ENCODE measurements at regions of chr3 and their contacts with region 1.

Region 1: DNA sequence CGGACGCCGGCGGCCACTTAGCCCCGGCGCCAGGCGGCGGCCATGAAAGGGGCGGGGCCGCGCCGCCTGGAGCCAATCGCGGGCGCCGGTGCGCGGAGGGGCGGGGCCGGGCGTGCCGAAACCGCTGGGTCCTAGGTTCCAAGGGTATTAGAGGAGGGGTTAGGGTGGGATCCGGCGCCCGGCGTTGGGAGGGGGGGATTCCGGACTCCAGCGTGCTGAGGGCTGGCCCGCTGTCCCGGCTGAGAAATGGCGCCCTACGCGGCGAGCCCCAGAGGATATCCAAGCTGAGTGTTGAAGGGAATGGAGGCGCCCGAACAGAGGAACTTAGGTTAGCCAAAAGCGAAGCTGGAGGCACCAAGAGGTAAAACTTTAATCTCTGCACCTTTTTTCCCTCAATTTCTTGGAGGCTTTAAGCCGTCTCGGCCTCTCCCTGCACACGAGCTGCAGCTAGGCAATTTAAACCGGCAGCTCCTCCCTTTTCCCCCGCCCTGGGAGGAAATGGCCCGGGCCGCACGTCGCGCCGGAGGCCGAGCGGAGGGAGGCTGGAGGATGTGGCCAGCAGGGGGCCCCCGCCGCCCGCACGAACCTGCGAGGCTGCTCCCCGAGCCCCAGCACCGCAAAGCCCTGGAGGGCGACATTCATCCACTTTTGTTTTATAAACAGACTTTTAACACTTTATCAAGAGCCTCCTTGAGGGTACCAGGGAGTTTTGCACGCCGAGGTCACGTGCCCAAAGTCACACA is at the start of gene XXYLT1:
- DNase-seq: peak; percentile 91
- CTCF ChIP-seq: peak; percentile 93

Region 2: DNA sequence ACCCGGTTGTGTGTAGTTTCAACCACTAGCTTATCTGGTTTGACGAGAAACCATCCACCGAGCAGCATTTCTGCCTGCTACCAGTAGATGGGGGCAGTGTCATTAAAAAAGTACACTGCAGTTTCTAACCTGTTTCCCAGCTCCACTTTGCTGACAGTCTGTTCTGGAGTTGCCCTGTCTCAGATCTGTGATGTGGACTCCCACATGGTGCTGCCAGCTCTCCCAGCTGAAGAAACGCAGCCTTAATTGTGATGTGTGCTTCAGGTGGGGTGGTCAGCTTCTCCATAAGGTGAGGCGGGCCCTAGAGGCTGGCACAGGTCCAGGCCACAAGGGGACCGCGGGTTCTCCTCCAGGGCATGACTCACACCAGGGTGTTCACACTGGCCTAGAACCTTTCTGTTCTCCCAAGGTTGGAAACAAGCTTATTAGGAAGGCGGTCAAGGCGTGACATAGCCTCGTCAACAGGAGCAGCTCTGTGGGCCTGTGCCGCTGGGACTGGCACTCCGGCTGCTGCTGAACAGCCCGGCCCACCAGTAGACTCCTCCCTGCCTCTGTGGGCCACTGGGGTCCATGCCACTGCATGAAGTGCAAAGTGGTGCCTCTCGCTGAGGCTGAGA is 588.5 kb before region 1 on chr3:
- CTCF ChIA-PET with region 1: interaction called, 28 read pairs
- POLR2A ChIA-PET with region 1: no interaction called
- DNase-seq: peak; percentile 82
- CTCF ChIP-seq: peak; percentile 76

Region 3: GRCh38 chr3:195040773-195041520 is 230.3 kb before region 1 on chr3:
- CTCF ChIA-PET with region 1: no interaction called
- POLR2A ChIA-PET with region 1: no interaction called
- DNase-seq: no peak
- CTCF ChIP-seq: no peak

Region 4: DNA sequence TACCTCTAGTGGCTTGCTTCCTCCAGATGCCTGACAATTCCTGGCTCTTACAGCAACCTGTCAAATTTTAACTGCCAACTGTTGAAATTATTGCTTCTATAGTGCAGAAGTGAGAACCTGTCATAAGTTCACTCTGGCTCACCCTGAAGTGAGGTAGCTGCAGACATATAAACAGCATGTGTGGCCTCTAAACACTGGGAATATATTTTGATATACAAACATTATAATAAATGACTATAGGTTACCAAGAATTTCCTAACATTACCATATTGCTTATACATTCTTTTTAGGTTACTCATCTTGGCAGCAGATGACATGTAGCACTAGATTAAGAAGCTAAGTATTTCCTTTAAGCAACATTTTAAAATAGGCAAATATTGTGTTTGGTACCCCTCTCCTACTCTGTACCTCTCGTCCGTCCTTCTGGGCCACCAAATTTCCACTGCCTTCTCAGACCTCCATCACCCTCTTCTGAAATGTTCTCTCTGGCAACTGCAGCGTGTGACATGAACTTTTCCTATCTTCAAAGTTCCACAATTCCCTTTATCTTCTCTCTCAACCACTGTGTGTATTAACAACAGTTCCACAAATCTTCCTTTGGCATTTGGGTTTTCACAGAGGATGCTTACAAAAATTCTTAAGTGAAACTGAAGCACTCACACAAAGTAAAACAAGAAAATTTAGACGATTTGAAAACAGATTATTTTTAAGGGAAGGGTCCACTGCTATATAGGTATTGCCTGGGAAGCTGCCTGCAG is 15.0 kb after region 1 on chr3:
- CTCF ChIA-PET with region 1: interaction called, 31 read pairs
- POLR2A ChIA-PET with region 1: no interaction called
- DNase-seq: no peak
- CTCF ChIP-seq: no peak

Region 5: DNA sequence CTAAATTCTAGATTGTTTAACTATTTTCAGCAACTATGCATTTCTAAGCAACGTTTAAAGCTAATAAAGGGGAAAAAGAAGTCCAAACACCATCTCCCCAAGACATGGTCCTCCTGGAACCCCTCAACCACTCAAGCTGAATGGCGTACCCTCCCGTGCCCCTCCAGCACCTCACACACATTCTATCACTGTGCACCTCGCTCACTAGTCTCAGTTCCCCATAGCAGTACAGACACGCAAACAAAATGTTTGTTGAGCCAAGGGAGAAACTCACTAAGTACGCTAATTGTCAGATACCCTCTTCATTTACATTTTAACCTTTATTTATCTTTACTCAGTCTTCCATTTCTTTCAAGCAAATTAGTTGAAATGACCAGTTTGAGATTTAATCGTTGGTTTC is 122.7 kb after region 1 on chr3:
- CTCF ChIA-PET with region 1: interaction called, 12 read pairs
- POLR2A ChIA-PET with region 1: no interaction called
- DNase-seq: peak; percentile 56
- CTCF ChIP-seq: no peak

Region 6: DNA sequence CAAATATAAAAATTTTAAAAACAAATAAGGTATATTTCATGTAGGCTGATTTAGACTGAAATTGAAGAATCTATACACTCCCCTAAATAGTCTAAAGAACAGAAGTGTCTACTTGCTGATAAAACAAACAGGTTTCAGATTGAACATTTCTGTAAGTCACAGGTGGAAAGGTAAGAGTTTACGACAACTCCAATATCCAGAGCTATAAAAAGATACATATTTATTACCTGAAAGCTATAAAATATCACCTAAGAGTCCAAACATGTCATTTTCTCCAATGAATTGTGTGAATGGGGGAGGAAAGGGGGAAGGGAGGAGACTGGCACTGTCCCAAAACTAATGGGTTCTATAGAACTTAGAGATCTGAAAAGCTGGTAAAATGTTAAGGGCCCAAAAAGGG is 245.7 kb after region 1 on chr3:
- CTCF ChIA-PET with region 1: interaction called, 215 read pairs
- POLR2A ChIA-PET with region 1: interaction called, 3 read pairs
- DNase-seq: no peak
- CTCF ChIP-seq: no peak

Region 7: GRCh38 chr3:195532834-195533233 is 261.5 kb after region 1 on chr3:
- CTCF ChIA-PET with region 1: interaction called, 215 read pairs
- POLR2A ChIA-PET with region 1: no interaction called
- DNase-seq: no peak
- CTCF ChIP-seq: no peak

Region 8: DNA sequence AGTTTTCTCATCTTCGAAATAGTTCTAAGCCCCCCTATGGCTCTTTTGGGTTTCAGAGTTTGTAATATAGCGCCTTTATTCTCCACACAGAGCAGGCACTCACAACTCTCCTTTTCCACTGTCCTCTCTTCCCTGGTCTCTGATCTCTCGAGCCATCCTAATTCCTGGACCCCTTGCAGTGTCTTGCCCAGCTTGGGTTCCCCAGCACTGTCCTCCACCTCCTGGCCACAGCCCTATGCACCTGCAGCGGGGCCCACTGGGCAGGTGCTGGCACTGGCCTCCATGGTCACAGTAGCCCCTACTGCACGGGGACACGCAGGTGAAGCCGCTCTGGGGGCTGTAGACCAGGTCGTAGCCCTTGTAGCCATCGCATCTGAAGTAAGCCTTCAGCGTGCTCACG is 477.4 kb after region 1 on chr3:
- CTCF ChIA-PET with region 1: no interaction called
- POLR2A ChIA-PET with region 1: no interaction called
- DNase-seq: no peak
- CTCF ChIP-seq: no peak

Region 9: DNA sequence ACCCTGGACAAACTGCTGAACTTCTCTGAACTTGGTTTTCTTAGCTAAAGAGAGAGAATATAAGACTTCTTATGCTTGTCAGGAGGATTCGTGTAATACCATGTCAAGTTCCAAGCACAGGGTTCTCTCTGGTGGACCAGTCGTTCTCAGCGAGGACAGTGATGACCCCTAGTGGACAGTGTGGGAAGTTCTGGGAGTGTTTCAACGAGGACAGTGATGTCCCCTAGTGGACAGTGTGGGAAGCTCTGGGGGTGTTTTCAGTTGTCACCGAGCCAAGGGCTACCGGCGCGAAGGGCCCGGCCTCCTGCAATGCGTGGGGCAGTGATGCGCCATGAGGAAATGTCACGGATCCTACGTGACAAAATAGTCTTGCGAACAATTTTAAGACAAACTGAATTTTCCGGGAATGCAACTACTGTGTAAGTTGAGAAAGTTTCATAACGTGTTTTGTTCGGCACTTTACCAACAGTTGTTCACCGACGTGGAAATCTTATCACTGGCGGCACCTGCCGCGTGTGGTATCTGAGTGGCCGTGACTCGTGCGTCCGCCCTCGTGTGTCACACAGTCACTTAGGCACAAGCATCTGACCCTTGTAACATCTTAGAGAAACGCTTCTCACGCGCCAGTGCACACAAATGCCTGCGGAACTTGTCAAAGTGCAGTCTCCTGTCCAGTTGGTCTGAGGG is 579.7 kb after region 1 on chr3:
- CTCF ChIA-PET with region 1: interaction called, 11 read pairs
- POLR2A ChIA-PET with region 1: no interaction called
- DNase-seq: peak; percentile 92
- CTCF ChIP-seq: peak; percentile 99

Measured in GM10248 (cell line).